H1 (cell line): ENCODE measurements at regions of chr10 and their contacts with region 1.

Region 1: GRCh38 chr10:101042667-101043355 is 11.8 kb downstream of the SFXN3 start:
- DNase-seq: peak; percentile 90 to 97
- H3K4me3 ChIP-seq: peak overlapping the region; percentile 65 to 82 (median 73)
- H3K27ac ChIP-seq: no peak overlapping the region
- H3K4me1 ChIP-seq: peaks cover 3 to 24% (median 13%) of the 10 kb centered on the region in 4 experiments
- H3K27me3 ChIP-seq: peaks cover 20 to 42% (median 36%) of the 10 kb centered on the region in 4 experiments
- CTCF ChIP-seq: no peak
- EP300 ChIP-seq: no peak
- POLR2A ChIP-seq: no peak
- RAD21 ChIP-seq: no peak

Region 2: GRCh38 chr10:100979791-100980272 is 63.0 kb before region 1 on chr10:
- CTCF ChIA-PET with region 1: no interaction called
- POLR2A ChIA-PET with region 1: no interaction called
- DNase-seq: no peak
- H3K4me3 ChIP-seq: no peak overlapping the region
- H3K27ac ChIP-seq: no peak overlapping the region
- H3K4me1 ChIP-seq: no peaks in the 10 kb centered on the region
- H3K27me3 ChIP-seq: no peaks in the 10 kb centered on the region
- CTCF ChIP-seq: no peak
- EP300 ChIP-seq: no peak
- POLR2A ChIP-seq: no peak
- RAD21 ChIP-seq: no peak

Region 3: DNA sequence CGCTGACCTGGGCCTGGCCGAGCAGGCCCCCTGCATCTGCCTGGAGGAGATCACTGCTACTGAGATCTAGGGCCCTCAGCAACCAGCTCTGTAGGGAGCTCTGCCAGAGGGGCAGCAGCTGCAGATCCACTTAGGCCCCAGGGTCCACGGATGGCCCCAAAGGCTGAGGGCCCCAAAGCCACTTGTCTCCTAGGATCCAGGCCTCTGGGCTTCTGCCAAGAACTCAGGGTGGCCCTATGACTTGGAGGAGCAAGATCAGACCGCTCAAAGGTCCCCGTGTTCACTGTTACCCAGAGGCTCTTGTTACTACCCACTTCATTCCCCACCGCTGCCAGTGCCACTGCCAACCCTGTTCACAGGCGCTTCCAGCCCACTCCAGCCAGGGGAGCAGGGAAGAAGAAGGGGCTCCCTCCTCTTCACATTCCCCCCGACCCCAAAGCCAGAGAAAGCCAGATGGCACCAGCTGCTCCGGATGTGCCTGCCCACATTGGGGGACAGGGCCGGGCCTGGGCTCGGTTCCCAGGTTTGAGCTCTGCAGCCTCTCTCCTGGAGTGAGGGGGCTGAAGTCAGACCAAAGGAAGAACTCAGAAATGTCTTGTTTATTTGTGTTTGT is 35.6 kb before region 1 on chr10:
- CTCF ChIA-PET with region 1: interaction called, 30 read pairs
- POLR2A ChIA-PET with region 1: interaction called, 5 read pairs
- DNase-seq: no peak
- H3K4me3 ChIP-seq: no peak overlapping the region
- H3K27ac ChIP-seq: no peak overlapping the region
- H3K4me1 ChIP-seq: peaks cover 0 to 12% (median 5%) of the 10 kb centered on the region in 4 experiments; a peak in 5 of 7 replicates
- H3K27me3 ChIP-seq: no peaks in the 10 kb centered on the region
- CTCF ChIP-seq: no peak
- EP300 ChIP-seq: no peak
- POLR2A ChIP-seq: no peak
- RAD21 ChIP-seq: no peak

Region 4: DNA sequence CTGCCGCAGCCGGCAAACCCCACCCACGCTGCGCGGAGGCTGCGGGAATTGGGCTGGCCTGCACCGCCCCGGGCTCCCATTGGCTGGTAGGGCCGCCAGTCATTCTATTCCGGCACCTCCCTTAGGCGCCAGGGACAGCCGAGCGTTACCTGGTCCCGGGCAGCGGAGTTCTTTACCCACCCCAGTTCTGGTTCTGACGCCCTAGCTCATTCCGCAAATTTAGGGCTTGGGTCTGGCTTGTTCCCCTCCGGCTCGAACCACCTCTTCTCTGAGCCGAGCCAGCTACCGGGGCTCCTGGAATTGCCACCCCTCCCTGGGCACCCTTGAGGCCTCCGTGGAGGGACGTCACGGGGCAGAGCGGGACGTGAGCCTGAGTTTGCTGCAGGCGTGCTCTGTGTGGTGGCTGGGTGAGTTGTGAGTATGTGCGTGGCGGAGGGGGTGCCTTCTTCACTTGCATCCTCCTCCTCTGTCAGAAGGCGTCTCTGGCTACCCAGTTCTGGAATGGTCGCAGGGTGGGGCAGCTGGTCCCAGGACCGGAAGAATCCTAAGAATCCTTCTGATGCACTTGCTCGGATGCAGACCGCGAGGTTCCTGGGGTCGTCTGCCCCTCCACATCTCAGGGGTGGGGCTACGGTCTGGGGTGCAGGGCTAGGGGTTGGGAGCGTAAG is 11.5 kb before region 1 on chr10 and contains the starts of genes PDZD7 and SFXN3:
- CTCF ChIA-PET with region 1: interaction called, 2,176 read pairs
- POLR2A ChIA-PET with region 1: interaction called, 11 read pairs
- DNase-seq: peak in 1 of 2 experiments; percentile 98
- H3K4me3 ChIP-seq: peak within 1 kb of the TSS; percentile 41 to 66 (median 58)
- H3K27ac ChIP-seq: no peak within 1 kb of the TSS
- H3K4me1 ChIP-seq: peaks cover 0 to 26% (median 21%) of the 10 kb centered on the region in 4 experiments; a peak in 6 of 7 replicates
- H3K27me3 ChIP-seq: peaks cover 1 to 45% (median 36%) of the 10 kb centered on the region in 4 experiments
- CTCF ChIP-seq: no peak
- EP300 ChIP-seq: no peak
- POLR2A ChIP-seq: no peak
- RAD21 ChIP-seq: no peak
- total RNA-seq, gene PDZD7: 0.88 and 1.1 TPM in 2 replicates
- total RNA-seq, gene SFXN3: 2.8 and 3.1 TPM in 2 replicates

Region 5: DNA sequence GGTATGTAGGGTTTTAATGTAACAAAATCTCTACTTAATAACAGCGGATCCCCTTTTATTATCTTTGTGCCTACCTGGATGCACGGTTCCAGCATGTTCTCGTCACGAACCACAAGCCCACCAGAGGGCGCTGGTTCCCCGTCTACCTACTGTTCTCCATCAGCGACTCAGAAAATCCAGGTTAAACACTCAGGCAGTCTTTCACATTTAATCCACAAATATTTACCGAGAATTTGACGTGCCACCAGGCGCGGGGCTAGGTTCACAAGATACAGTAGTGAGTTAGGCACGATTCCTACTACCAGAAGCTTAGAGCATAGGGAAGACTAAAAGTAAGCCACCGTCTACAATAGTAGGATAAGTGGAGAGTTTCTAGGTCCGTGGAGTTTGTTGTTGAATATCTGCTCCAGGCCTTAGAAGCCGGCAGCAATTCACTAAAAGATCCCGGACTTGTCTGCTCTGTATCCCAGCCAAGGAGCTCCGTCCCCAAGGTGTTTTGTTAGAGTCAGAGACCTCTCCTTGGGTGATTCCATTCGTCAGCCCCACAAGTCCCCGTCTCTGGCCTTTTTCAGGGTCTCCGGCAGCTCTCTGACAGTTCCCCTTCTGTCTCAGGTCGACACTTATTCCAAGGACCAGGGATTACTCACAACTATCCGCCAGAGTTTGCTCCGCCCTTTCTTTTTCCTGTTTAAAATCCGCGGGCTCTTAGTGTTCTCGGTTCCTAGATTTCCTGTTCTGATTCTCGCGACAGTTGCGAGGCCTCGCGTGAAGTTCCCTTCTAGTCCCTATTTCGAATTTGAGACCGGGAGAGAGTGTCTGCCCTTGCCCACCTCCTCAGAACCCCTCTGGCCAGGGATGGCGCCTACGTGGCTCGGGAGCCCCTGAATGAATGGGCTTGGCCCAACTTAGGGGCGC is 17.5 kb after region 1 on chr10:
- CTCF ChIA-PET with region 1: interaction called, 2,176 read pairs
- POLR2A ChIA-PET with region 1: interaction called, 85 read pairs
- DNase-seq: peak in 1 of 2 experiments; percentile 95
- H3K4me3 ChIP-seq: peak overlapping the region; percentile 89 to 97 (median 94)
- H3K27ac ChIP-seq: peak overlapping the region; percentile 76
- H3K4me1 ChIP-seq: peaks cover 0 to 26% (median 16%) of the 10 kb centered on the region in 4 experiments; a peak in 6 of 7 replicates
- H3K27me3 ChIP-seq: peaks cover 35 to 42% (median 39%) of the 10 kb centered on the region in 4 experiments
- CTCF ChIP-seq: peak; percentile 85 to 89 (median 86)
- EP300 ChIP-seq: no peak
- POLR2A ChIP-seq: no peak; a peak in 1 of 3 replicates
- RAD21 ChIP-seq: peak; percentile 77 to 83